ENCODE measurements at regions of chr4 and their contacts with region 1.

Region 1: DNA sequence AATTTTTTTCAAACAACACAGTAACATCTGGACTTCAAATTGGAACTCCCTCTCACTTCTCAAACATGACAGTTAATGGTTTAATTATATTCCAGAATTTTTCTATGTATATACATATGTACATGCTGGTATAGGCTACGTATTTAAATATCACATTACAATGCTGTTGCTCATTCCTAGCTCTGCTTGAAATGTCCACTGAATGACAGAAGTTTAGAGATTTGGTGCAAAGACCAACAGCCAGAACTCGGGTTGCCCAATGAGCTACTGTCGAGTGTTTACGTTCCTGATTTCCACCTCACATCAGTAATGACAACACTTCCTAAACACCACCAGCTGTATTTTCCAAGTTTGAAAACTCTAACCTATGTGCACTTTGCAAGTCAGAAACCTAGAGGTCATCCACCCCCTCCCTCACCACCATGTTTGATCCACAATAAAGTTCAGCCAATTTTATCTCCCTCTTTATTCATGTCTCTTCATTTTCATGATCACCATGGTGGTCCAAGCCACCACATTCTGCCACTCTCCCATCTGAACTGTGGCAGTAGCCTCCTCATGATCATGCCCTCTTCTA is 49.3 kb upstream of the RPL34 start:
- DNase-seq: no peak
- ATAC-seq: no peak

Region 2: GRCh38 chr4:108018040-108018883 is 552.8 kb before region 1 on chr4:
- intact Hi-C with region 1: loop called (anchors 2 kb)
- DNase-seq: peak; percentile 71
- ATAC-seq: peak; percentile 71

Region 3: DNA sequence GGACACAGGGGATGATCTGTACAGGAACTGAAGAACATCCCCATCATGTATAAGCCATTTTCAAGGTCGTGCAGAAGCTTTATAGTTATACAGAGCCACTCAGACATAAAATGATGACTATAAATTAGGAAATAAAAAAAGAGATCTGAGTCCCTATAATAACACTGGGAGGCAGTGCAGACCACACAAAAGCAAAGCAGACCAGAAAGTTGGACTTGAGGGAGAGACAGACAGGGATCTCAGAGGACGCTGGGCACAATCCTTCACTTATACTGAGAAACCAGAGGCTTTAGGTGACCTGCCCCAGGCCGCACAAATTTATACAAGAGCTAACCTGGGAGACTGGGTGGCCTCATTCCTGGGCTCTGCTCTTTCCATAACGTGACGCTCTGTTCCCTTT is 510.9 kb before region 1 on chr4:
- intact Hi-C with region 1: loop called (anchors 5 kb)
- DNase-seq: no peak
- ATAC-seq: peak; percentile 37

Region 4: DNA sequence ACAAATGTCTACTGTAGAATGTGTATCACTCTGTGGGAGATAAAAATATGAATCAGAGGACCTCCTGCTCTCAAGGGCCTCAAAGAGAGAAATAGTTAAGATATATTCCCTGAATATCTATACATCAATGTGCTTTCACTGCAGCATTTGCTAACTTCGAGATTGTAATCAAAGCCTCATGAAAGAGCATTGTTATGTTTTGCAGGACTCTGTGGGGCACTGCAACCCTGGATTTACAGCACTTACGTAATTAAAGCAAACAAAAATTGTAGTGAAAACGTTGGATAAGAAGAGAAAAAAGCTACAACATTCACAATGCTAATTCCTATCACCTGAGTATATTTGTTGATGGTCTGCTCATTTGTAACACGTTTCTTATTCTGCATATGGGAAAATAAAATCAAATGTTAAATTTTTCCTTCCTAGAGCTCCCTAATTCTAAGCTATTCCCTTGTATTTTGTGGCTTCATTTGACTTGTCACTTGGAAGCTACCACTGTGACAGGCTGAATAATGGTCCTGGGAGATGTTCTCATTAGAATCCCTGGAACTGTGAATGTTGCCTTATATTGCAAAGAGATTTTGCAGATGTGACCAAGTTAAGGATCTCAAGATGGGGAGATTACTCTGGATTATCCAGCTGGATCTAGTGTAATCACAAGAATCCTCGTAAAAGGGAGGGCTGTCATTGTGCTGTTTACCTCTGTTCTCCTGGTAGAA is 143.9 kb after region 1 on chr4:
- intact Hi-C with region 1: no loop called
- DNase-seq: no peak
- ATAC-seq: no peak

Measured in Right ventricle myocardium inferior (tissue), 1 donor.